Activated CD4-positive, alpha-beta T cell treated with anti-CD3 and anti-CD28 coated beads for 36 hours (primary cell): ENCODE measurements at regions of chr22 and their contacts with region 1.

Region 1: DNA sequence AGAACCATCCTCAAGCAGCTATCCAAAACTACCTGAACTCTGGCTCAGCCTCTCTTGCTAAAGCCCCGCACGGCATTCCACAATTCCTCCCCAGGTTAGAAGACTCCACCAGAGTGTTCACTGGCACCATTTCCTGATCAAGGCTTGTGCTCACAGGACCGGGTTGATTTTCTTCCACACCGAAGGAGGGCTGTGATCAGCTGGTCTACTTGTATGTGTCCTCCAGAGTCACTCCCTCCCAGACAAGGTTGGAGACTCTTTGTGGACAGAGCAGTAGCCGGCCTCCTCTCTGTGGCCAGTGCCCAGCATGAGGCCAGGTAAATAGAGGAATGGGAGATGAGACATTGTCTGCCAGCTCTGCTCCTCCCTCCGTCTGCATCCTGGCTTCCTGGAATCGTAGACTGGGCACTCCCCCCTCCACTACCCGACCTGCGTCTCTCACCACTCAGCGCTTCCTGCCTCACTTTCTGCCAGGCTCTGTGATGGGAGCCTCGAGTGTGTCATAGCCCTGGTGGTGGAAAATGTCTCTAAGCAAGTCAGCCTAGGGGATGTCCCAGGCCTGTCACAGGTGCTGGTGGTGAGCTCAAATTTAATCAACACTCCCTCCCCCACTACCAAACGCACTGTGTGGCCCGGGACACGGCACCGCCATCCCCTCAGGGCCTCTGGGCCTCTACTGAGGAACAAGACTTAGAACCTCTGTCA is 12.5 kb upstream of the TMPRSS6 start:
- DNase-seq: peak; percentile 96
- ATAC-seq: peak; percentile 94
- H3K4me3 Mint-ChIP-seq: peak overlapping the region; percentile 79
- H3K27ac Mint-ChIP-seq: peak overlapping the region; percentile 98
- H3K4me1 Mint-ChIP-seq: peaks cover 76% of the 10 kb centered on the region
- H3K27me3 Mint-ChIP-seq: no peaks in the 10 kb centered on the region

Region 2: DNA sequence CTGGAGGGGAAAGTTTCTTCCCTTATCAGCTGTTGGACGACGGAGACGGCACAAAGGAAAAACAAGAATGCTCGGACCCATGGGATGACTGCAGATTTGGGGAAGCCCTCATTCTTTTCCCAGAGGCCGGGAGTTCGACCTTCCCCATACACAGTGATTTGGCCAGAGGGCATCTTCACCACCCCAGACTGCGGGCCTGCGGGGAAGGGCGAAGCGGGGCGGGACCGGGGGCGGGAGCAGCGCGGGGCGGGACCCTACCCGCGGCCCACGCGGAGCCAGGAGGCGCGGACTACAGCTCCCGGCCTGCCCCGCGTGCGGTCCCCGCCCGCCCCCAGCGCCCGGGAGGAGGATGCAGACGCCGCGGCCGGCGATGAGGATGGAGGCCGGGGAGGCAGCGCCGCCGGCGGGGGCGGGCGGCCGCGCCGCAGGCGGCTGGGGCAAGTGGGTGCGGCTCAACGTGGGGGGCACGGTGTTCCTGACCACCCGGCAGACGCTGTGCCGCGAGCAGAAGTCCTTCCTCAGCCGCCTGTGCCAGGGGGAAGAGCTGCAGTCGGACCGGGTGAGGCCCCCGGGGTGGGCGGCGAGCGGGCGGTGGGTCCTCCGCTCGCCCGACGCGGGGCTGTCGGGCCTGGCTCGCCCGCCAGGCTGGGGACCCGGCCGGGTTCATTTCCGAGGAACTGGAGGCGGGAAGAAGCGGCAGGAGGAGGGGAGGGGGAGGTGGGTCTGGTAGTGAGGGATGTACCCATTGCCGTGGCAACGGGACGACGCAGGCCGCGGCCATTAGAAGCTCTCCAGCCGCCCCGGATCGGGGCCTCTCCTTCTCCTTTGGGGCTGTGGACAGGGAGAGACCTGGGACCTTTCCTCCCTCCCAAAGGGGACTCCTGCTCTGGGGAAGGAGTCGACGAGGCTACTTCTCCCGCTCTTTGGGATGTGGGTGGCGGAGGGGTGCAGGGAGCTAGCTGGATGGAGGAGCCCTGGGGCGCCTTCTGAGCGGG is 70.4 kb before region 1 on chr22 and contains the start of gene KCTD17:
- CTCF ChIA-PET with region 1: no interaction called
- POLR2A ChIA-PET with region 1: interaction called, 3 read pairs
- intact Hi-C with region 1: loop called in 1 of 2 experiments (anchors 1 kb)
- DNase-seq: peak; percentile 90
- ATAC-seq: peak; percentile 100
- H3K4me3 Mint-ChIP-seq: peak within 1 kb of the TSS; percentile 79
- H3K27ac Mint-ChIP-seq: peak within 1 kb of the TSS; percentile 67
- H3K4me1 Mint-ChIP-seq: peaks cover 6% of the 10 kb centered on the region
- H3K27me3 Mint-ChIP-seq: no peaks in the 10 kb centered on the region
- total RNA-seq, gene KCTD17: 32.5 to 36.8 TPM

Region 3: DNA sequence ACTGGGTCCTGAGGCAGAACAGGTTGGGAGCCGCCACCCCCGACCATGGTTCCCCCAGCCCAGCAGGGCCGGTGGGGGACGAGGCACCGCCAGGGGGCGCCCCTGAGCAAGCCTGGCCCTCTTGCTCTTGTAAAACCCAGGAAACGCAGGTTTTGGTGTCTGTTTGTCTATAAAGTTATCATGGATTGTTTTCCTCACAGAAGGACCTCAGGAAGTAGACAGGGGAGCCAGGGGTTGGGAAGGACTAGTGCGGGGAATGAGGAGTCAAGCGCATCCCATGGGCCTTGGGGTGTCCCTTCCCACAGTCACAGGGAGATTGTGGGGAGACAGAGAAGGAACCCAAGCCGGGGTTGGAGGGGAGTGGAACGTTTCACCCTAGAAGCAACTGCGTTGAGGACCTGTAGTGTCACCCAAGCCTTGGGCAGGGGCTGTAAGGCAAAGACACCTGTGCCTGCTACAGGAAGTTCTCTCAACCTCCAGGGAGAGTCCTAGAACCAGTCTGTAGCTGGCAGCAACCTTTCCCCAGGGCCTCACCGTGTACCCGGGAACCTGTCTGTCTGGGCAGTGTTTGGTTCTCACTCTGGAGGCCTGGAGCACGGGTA is 44.1 kb before region 1 on chr22:
- CTCF ChIA-PET with region 1: interaction called, 53 read pairs
- POLR2A ChIA-PET with region 1: interaction called, 53 read pairs
- intact Hi-C with region 1: loop called (anchors 1 kb)
- DNase-seq: peak; percentile 94
- ATAC-seq: peak; percentile 18
- H3K4me3 Mint-ChIP-seq: no peak overlapping the region
- H3K27ac Mint-ChIP-seq: peak overlapping the region; percentile 94
- H3K4me1 Mint-ChIP-seq: peaks cover 59% of the 10 kb centered on the region
- H3K27me3 Mint-ChIP-seq: peaks cover 10% of the 10 kb centered on the region

Region 4: DNA sequence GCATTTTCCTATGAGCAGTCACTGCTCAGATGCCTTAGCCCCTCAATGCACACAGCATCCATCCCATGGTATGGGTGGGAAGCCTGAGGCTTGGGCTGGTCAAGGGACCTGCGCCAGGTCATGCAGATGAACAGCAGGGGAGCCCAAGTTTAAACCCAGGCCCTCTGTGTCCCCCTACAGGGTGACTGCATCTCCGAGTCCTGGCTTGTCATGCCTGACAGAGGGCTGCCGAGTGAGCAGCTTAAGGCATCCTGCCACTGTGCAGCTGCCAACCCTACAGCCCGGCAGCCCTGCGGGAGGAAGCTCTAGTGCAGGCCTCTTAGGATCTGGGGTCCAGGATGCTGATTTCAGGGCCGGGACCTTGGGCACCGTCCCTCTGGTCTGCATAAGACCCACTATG is 17.7 kb after region 1 on chr22:
- CTCF ChIA-PET with region 1: interaction called, 7 read pairs
- POLR2A ChIA-PET with region 1: interaction called, 23 read pairs
- intact Hi-C with region 1: loop called in 1 of 2 experiments (anchors 1 kb)
- DNase-seq: no peak
- ATAC-seq: no peak
- H3K4me3 Mint-ChIP-seq: no peak overlapping the region
- H3K27ac Mint-ChIP-seq: peak overlapping the region; percentile 93
- H3K4me1 Mint-ChIP-seq: peaks cover 56% of the 10 kb centered on the region
- H3K27me3 Mint-ChIP-seq: no peaks in the 10 kb centered on the region

Region 5: GRCh38 chr22:37218771-37219411 is 96.9 kb after region 1 on chr22:
- CTCF ChIA-PET with region 1: interaction called, 3 read pairs
- POLR2A ChIA-PET with region 1: interaction called, 4 read pairs
- intact Hi-C with region 1: loop called (anchors 1 to 2 kb)
- DNase-seq: peak; percentile 83
- ATAC-seq: peak; percentile 68
- H3K4me3 Mint-ChIP-seq: peak overlapping the region; percentile 78
- H3K27ac Mint-ChIP-seq: peak overlapping the region; percentile 94
- H3K4me1 Mint-ChIP-seq: peaks cover 79% of the 10 kb centered on the region
- H3K27me3 Mint-ChIP-seq: no peaks in the 10 kb centered on the region